ENCODE measurements at regions of chr10 and their contacts with region 1.

Region 1: DNA sequence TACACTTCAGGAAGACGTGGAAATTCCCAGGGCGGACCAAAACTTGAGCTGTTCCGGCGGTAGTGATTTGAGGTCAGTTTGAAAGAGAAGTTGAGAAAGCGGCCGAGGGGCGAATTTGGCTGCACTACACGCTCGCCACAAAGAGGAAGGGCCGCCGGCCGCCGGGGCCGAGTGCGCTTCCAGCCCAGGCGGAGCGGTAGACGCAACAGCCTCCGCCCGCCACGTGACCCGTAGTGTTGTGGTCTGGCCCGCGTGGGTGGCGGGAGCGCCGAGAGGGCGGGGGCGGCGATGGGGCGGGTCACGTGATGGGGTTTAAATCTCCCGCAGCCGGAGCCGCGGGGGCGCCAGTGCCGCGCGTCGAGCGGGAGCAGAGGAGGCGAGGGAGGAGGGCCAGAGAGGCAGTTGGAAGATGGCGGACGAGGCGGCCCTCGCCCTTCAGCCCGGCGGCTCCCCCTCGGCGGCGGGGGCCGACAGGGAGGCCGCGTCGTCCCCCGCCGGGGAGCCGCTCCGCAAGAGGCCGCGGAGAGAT is at the start of gene SIRT1:
- DNase-seq: peak; percentile 52
- ATAC-seq: peak; percentile 91
- H3K4me3 ChIP-seq: peak within 1 kb of the TSS; percentile 61 to 66
- H3K27ac ChIP-seq: peak within 1 kb of the TSS; percentile 93
- H3K4me1 ChIP-seq: peaks cover 8% of the 10 kb centered on the region
- H3K27me3 ChIP-seq: no peaks in the 10 kb centered on the region
- CTCF ChIP-seq: no peak
- total RNA-seq, gene SIRT1: 45.0 TPM

Region 2: DNA sequence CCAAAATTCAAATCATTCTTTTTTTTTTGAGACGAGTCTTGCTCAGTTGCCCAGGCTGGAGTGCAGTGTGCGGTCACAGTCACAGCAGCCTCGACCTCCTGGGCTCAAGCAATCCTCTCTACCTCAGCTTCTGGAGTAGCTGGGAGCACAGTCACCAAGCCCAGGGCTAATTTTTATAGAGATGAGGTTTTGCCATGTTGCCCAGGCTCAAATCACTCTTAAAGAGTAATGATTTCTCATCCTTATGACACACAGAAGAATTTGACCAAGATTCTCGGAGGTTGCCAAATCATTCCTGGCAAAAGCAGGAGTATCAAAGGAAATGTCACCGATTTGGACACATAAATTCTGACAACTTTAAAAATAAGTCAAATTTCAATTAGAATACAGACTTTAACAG is 39.2 kb after region 1 on chr10:
- CTCF ChIA-PET with region 1: no interaction called
- POLR2A ChIA-PET with region 1: interaction called, 18 read pairs
- in situ Hi-C with region 1: no loop called
- intact Hi-C with region 1: no loop called
- DNase-seq: no peak
- ATAC-seq: no peak
- H3K4me3 ChIP-seq: no peak overlapping the region
- H3K27ac ChIP-seq: no peak overlapping the region
- H3K4me1 ChIP-seq: no peaks in the 10 kb centered on the region
- H3K27me3 ChIP-seq: no peaks in the 10 kb centered on the region
- CTCF ChIP-seq: no peak

Region 3: GRCh38 chr10:67988606-67989005 is 104.2 kb after region 1 on chr10:
- CTCF ChIA-PET with region 1: no interaction called
- POLR2A ChIA-PET with region 1: interaction called, 11 read pairs
- in situ Hi-C with region 1: no loop called
- intact Hi-C with region 1: no loop called
- DNase-seq: no peak
- ATAC-seq: no peak
- H3K4me3 ChIP-seq: no peak overlapping the region
- H3K27ac ChIP-seq: no peak overlapping the region
- H3K4me1 ChIP-seq: no peaks in the 10 kb centered on the region
- H3K27me3 ChIP-seq: no peaks in the 10 kb centered on the region
- CTCF ChIP-seq: no peak

Region 4: GRCh38 chr10:68145705-68146104 is 261.3 kb after region 1 on chr10:
- CTCF ChIA-PET with region 1: no interaction called
- POLR2A ChIA-PET with region 1: interaction called, 16 read pairs
- in situ Hi-C with region 1: no loop called
- intact Hi-C with region 1: no loop called
- DNase-seq: no peak
- ATAC-seq: no peak
- H3K4me3 ChIP-seq: no peak overlapping the region
- H3K27ac ChIP-seq: peak overlapping the region; percentile 99
- H3K4me1 ChIP-seq: peaks cover 34% of the 10 kb centered on the region
- H3K27me3 ChIP-seq: no peaks in the 10 kb centered on the region
- CTCF ChIP-seq: no peak